ENCODE measurements at regions of chr11 and their contacts with region 1.

Region 1: DNA sequence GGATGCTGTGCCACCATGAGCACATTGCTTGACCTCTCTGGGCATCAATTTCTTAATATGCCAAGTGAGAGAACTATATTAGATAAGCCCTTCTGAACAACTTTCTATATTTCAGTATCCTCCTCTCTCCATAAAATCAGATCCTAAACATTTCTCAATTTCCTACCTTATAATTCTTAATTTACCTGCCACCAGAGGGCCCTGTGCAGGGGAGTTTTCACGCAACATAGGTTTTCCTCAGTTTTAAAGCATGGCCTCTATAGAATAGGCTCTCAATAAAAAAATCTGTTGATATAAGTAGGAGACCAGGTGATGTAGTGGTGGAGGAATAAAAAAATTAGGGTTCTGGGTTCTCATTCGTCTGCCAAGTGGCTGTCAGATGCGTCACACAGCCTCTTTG is 83.7 kb upstream of the DBX1 start:
- DNase-seq: no peak
- ATAC-seq: peak; percentile 72
- H3K4me3 ChIP-seq: no peak overlapping the region
- H3K27ac ChIP-seq: no peak overlapping the region
- H3K4me1 ChIP-seq: no peaks in the 10 kb centered on the region
- H3K27me3 ChIP-seq: peaks cover 23% of the 10 kb centered on the region
- CTCF ChIP-seq: peak; percentile 40 to 69 (median 57); a peak in 5 of 6 replicates
- POLR2A ChIP-seq: no peak
- RAD21 ChIP-seq: peak; percentile 32; the same call in 1 of the 2 replicates

Region 2: DNA sequence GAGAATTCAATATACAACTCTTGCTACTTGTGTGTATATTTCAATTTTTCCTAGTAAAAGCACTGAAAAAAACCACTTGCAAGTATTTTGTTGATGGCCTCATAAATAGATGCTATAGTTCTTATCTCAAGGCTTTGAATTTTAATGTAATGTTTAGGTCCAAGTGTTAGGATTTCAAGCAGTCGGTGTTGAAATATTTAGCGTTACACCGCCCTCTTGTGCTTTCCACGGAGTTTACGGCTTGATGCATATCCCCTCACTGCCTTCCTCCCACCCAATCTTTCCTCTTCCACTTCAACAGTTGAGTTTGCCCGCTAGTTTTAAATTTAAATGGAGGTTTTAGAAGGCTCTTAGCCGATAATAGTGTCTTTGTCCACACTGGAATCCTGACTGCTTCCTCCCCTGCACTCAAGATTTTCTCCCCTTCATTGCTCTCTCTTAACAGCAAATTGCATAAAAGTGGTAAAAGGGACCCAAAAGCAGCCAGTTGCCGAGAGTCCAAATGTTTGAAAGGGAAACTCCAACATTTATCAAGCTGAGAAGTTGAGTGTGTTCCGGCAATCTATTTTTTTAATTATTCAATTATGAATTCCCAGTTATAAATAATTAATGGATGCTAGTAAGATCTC is 93.7 kb after region 1 on chr11:
- CTCF ChIA-PET with region 1: no interaction called
- POLR2A ChIA-PET with region 1: no interaction called
- RAD21 ChIA-PET with region 1: no interaction called
- intact Hi-C with region 1: loop called (anchors 1 kb)
- DNase-seq: peak; percentile 27
- ATAC-seq: peak; percentile 90
- H3K4me3 ChIP-seq: no peak overlapping the region
- H3K27ac ChIP-seq: no peak overlapping the region
- H3K4me1 ChIP-seq: no peaks in the 10 kb centered on the region
- H3K27me3 ChIP-seq: peaks cover 85% of the 10 kb centered on the region
- CTCF ChIP-seq: peak; percentile 47 to 63 (median 51); a peak in 5 of 6 replicates
- POLR2A ChIP-seq: no peak
- RAD21 ChIP-seq: peak; percentile 56

Region 3: GRCh38 chr11:20684688-20685087 is 440.7 kb after region 1 on chr11:
- CTCF ChIA-PET with region 1: no interaction called
- POLR2A ChIA-PET with region 1: no interaction called
- RAD21 ChIA-PET with region 1: no interaction called
- intact Hi-C with region 1: no loop called
- DNase-seq: no peak
- ATAC-seq: no peak
- H3K4me3 ChIP-seq: no peak overlapping the region
- H3K27ac ChIP-seq: no peak overlapping the region
- H3K4me1 ChIP-seq: no peaks in the 10 kb centered on the region
- H3K27me3 ChIP-seq: 0 out of 2 replicates have a peak, but pooled peaks cover 4% of the 10 kb centered on the region
- CTCF ChIP-seq: no peak
- POLR2A ChIP-seq: no peak
- RAD21 ChIP-seq: no peak